CD4-positive, alpha-beta T cell (primary cell): ENCODE measurements at regions of chr1 and their contacts with region 1.

Region 1: DNA sequence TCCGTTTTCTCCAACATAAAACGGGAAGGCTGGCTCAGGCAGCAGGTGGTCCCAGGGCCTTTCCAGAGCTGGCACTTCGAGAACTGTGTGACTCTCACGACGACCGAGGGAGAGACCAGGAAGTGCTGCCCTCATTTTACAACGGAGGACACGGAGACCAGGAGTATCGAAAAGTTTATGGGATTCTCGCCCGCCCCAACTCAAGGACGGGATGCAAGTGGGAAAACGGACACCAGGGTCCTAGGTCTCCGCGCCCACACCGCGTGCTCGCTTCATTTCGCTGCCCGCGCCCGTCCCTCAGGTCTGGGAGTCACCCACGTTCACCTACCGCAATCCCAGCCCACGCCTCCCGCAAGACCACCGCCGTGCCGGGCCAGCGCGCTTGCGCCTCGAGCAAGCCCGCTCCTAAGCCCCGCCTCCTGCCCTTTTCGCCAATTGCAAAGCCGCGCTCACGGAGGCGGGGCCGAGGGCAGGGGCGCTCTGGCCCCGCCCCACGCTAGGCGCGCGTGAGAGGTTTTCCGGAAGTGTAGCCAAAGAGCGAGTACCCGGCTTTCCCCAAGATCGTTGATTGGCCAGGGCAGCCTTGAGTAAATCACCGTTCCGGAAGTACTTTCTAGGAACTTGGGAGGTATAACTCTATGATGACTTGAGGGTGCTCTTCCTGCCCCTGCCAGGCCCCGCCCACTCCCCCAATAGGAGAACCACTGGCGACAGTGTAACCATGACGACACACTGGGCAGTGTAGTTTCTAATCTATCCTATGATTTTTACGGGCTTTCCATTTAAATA is at the start of gene PARS2:
- DNase-seq: peak; percentile 88 to 99 (median 94)
- ATAC-seq: peak; percentile 96
- H3K4me3 ChIP-seq: peak within 1 kb of the TSS; percentile 98
- H3K4me3 Mint-ChIP-seq: peak within 1 kb of the TSS; percentile 98
- H3K27ac ChIP-seq: peak within 1 kb of the TSS in 1 of 2 donors; percentile 71
- H3K27ac Mint-ChIP-seq: peak within 1 kb of the TSS; percentile 70
- H3K4me1 ChIP-seq: peaks cover 8% of the 10 kb centered on the region
- H3K4me1 Mint-ChIP-seq: peaks cover 26% of the 10 kb centered on the region
- H3K27me3 ChIP-seq: no peaks in the 10 kb centered on the region
- H3K27me3 Mint-ChIP-seq: no peaks in the 10 kb centered on the region
- CTCF ChIP-seq: no peak
- total RNA-seq, gene PARS2: not detected

Region 2: DNA sequence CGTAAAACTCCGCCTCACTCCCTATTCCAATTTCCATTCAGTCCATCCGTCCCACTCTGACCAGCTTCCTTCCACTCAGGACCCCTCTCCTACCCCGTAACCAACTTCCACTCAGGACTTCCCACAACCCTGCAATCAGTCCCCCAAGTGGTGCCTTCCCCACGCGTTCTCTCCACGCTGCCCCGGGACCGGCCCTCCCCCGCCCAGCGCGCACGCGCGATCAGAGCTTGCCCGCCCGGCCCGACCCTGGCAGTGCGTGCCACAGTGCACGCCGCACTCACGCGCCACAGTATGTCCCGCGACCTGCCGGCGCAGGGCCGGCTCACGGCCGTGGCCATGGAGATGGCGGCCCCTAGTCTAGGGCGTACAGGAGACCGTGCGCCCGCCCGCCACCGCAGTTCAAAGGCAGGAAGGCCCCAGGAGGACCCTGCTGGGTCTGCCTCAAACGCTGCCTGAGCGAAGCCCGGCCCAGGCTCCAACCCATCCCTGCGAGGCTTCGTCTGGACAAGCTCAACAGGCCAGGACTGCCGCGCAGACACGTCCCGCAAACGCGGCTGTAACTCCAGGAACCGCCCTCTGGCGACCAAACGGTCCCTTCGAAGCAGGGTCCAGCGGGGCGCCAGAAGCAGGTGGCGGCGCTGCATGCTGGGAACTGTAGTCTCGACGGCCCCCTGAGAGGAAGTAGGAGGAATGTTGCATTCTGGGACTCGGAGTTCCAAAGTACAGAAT is 926.2 kb before region 1 on chr1 and contains the start of gene NDC1:
- CTCF ChIA-PET with region 1: no interaction called
- POLR2A ChIA-PET with region 1: no interaction called
- intact Hi-C with region 1: loop called in 1 of 2 experiments (anchors 2 kb)
- DNase-seq: peak; percentile 79 to 96 (median 86)
- ATAC-seq: peak; percentile 89
- H3K4me3 ChIP-seq: peak within 1 kb of the TSS; percentile 73
- H3K4me3 Mint-ChIP-seq: peak within 1 kb of the TSS; percentile 95
- H3K27ac ChIP-seq: peak within 1 kb of the TSS; percentile 95 to 98
- H3K27ac Mint-ChIP-seq: peak within 1 kb of the TSS; percentile 95
- H3K4me1 ChIP-seq: peaks cover 13% of the 10 kb centered on the region
- H3K4me1 Mint-ChIP-seq: peaks cover 37% of the 10 kb centered on the region
- H3K27me3 ChIP-seq: peaks cover 0 to 5% of the 10 kb centered on the region in 2 experiments
- H3K27me3 Mint-ChIP-seq: no peaks in the 10 kb centered on the region
- CTCF ChIP-seq: no peak
- total RNA-seq, gene NDC1: 5.4 to 8.1 TPM

Region 3: GRCh38 chr1:54199765-54200518 is 564.4 kb before region 1 on chr1 and contains the starts of genes CYB5RL and MRPL37:
- CTCF ChIA-PET with region 1: no interaction called
- POLR2A ChIA-PET with region 1: no interaction called
- intact Hi-C with region 1: loop called in 1 of 2 experiments (anchors 2 kb)
- DNase-seq: peak; percentile 78 to 96 (median 84)
- ATAC-seq: peak; percentile 98
- H3K4me3 ChIP-seq: peak within 1 kb of the TSS; percentile 96
- H3K4me3 Mint-ChIP-seq: peak within 1 kb of the TSS; percentile 92
- H3K27ac ChIP-seq: peak within 1 kb of the TSS; percentile 22 to 37
- H3K27ac Mint-ChIP-seq: peak within 1 kb of the TSS; percentile 87
- H3K4me1 ChIP-seq: peaks cover 25% of the 10 kb centered on the region
- H3K4me1 Mint-ChIP-seq: peaks cover 34% of the 10 kb centered on the region
- H3K27me3 ChIP-seq: no peaks in the 10 kb centered on the region
- H3K27me3 Mint-ChIP-seq: no peaks in the 10 kb centered on the region
- CTCF ChIP-seq: no peak
- total RNA-seq, gene CYB5RL: 2.0 to 2.1 TPM
- total RNA-seq, gene MRPL37: 24.0 to 24.4 TPM

Region 4: GRCh38 chr1:54782156-54782555 is 17.8 kb after region 1 on chr1:
- CTCF ChIA-PET with region 1: no interaction called
- POLR2A ChIA-PET with region 1: no interaction called
- intact Hi-C with region 1: no loop called
- DNase-seq: no peak
- ATAC-seq: no peak
- H3K4me3 ChIP-seq: no peak overlapping the region
- H3K4me3 Mint-ChIP-seq: no peak overlapping the region
- H3K27ac ChIP-seq: no peak overlapping the region
- H3K27ac Mint-ChIP-seq: no peak overlapping the region
- H3K4me1 ChIP-seq: no peaks in the 10 kb centered on the region
- H3K4me1 Mint-ChIP-seq: no peaks in the 10 kb centered on the region
- H3K27me3 ChIP-seq: no peaks in the 10 kb centered on the region
- H3K27me3 Mint-ChIP-seq: no peaks in the 10 kb centered on the region
- CTCF ChIP-seq: no peak

Region 5: GRCh38 chr1:54800899-54801759 is 36.8 kb after region 1 on chr1 and contains the start of gene TTC22:
- CTCF ChIA-PET with region 1: interaction called, 13 read pairs
- POLR2A ChIA-PET with region 1: interaction called, 16 read pairs
- intact Hi-C with region 1: loop called in 1 of 2 experiments (anchors 2 kb)
- DNase-seq: peak; percentile 43 to 83 (median 68)
- ATAC-seq: peak; percentile 87
- H3K4me3 ChIP-seq: peak within 1 kb of the TSS; percentile 82
- H3K4me3 Mint-ChIP-seq: peak within 1 kb of the TSS; percentile 98
- H3K27ac ChIP-seq: peak within 1 kb of the TSS; percentile 33 to 57
- H3K27ac Mint-ChIP-seq: peak within 1 kb of the TSS; percentile 94
- H3K4me1 ChIP-seq: peaks cover 58% of the 10 kb centered on the region
- H3K4me1 Mint-ChIP-seq: peaks cover 63% of the 10 kb centered on the region
- H3K27me3 ChIP-seq: no peaks in the 10 kb centered on the region
- H3K27me3 Mint-ChIP-seq: no peaks in the 10 kb centered on the region
- CTCF ChIP-seq: peak; percentile 84
- total RNA-seq, gene TTC22: 4.4 to 4.5 TPM